A549 (cell line): ENCODE measurements at regions of chr10 and their contacts with region 1.

Region 1: DNA sequence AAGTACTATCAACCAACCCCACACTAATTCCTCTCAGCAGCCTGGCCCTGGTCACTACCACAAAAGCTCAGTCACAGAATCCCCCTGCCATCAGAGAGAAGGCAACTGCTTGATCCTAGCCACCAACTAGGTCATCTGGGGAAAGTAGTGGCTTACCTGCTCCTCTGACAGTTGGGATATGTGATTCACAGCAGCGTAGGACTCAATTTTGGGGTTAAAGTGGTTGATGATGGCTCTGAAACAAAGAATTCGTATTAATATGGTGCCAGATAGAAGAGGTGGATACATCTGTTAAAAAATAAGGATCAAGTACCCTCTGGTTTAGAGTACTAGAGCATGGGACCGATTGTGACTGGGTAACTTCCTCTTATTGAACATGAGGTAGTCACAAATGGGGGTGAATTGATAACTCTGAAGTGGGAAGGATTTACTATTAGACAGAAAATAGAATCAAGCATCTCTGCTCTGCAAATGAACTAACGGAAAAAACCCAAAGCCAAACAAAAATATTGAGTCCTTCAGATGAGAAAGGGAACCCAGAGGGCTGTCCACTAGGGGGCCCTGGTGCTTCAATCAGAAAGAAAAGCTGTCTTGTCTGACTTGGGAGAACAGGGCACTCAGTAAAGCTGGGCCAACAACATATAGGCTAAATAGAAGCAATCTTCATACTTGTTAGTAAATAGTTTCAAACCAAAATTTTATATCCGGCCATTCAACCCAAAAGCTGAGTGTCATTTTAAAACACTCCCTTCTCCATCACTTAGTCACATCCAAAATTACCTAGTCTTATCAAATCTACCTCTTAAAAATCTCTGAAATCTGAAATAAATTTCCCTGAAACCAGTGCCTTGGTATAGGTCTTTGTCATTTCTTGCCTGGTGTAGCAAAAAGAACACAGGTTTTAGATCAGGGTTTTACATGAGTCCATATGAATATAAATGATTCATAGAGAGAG is 45.9 kb upstream of the KCNIP2 start:
- DNase-seq: peak; percentile 69 to 73
- ATAC-seq: peak; percentile 93; a peak in 5 of 6 replicates
- H3K4me3 ChIP-seq: no peak overlapping the region
- H3K27ac ChIP-seq: peak overlapping the region; percentile 31 to 65; a peak in 2 of 6 replicates
- H3K4me1 ChIP-seq: peaks cover 12% of the 10 kb centered on the region
- CTCF ChIP-seq: peak; percentile 93
- EP300 ChIP-seq: no peak
- POLR2A ChIP-seq: no peak
- RAD21 ChIP-seq: peak; percentile 83 to 89

Region 2: DNA sequence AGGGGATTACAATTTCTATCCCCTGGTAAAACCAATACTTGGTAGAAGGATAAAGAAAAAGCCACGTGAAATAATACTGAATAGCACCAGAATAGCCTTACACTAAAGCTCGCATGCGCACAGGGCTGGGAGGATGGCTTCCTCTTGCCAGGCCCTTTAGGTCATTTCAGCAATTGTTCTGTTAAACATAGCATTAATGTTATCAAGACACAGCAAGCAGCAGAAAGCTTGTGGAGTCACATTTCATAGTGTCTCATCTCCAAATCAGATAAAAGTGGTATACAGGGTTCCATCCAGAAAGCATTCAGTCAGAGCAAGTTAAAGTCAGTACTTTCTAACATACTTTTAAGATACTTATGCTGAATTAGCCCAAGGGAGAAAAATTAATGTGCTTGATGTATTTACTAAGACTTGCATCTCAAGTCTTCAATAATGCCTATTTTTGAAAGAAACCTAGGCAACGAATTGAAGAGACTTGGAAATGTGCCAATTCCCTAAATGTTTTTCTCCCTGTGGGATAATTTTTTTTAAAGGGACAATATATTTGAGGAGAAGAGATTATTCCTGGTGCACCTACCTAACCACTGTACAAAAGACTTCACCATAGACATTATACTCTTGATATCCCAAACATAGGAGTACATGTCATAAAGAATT is 92.0 kb before region 1 on chr10:
- CTCF ChIA-PET with region 1: no interaction called
- POLR2A ChIA-PET with region 1: no interaction called
- DNase-seq: no peak
- ATAC-seq: no peak
- H3K4me3 ChIP-seq: no peak overlapping the region
- H3K27ac ChIP-seq: no peak overlapping the region
- H3K4me1 ChIP-seq: no peaks in the 10 kb centered on the region
- CTCF ChIP-seq: no peak
- EP300 ChIP-seq: no peak
- POLR2A ChIP-seq: no peak
- RAD21 ChIP-seq: no peak

Region 3: DNA sequence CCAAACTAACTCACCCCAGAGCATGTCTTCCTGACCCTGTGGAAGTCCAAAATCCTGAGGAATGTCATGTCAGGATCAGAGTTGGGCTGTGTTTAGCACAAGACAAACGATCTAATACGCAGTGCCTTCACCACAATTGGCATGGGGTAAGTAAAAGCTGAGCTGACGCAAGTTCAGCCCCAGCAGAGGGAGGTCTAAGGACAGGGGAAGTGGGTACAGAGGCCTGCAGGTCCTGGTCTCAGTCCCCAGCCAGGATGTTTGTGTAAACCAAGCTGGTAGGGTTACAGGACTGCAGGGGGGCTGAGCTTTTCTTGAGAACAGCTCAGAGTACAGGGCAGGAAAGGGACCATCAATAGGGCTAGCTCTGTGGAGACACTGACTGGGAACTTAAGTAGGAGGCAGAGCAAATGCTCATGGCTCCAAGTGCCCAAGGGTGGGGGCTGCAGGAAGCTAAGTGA is 40.6 kb before region 1 on chr10:
- CTCF ChIA-PET with region 1: interaction called, 73 read pairs
- POLR2A ChIA-PET with region 1: no interaction called
- DNase-seq: no peak
- ATAC-seq: no peak
- H3K4me3 ChIP-seq: no peak overlapping the region
- H3K27ac ChIP-seq: no peak overlapping the region
- H3K4me1 ChIP-seq: no peaks in the 10 kb centered on the region
- CTCF ChIP-seq: no peak
- EP300 ChIP-seq: no peak
- POLR2A ChIP-seq: no peak
- RAD21 ChIP-seq: no peak

Region 4: GRCh38 chr10:101858723-101859500 is 30.6 kb before region 1 on chr10:
- CTCF ChIA-PET with region 1: interaction called, 16 read pairs
- POLR2A ChIA-PET with region 1: no interaction called
- DNase-seq: no peak
- ATAC-seq: no peak
- H3K4me3 ChIP-seq: no peak overlapping the region
- H3K27ac ChIP-seq: no peak overlapping the region
- H3K4me1 ChIP-seq: peaks cover 10% of the 10 kb centered on the region; the same call in 2 of the 3 replicates
- CTCF ChIP-seq: no peak
- EP300 ChIP-seq: no peak
- POLR2A ChIP-seq: no peak
- RAD21 ChIP-seq: no peak

Region 5: DNA sequence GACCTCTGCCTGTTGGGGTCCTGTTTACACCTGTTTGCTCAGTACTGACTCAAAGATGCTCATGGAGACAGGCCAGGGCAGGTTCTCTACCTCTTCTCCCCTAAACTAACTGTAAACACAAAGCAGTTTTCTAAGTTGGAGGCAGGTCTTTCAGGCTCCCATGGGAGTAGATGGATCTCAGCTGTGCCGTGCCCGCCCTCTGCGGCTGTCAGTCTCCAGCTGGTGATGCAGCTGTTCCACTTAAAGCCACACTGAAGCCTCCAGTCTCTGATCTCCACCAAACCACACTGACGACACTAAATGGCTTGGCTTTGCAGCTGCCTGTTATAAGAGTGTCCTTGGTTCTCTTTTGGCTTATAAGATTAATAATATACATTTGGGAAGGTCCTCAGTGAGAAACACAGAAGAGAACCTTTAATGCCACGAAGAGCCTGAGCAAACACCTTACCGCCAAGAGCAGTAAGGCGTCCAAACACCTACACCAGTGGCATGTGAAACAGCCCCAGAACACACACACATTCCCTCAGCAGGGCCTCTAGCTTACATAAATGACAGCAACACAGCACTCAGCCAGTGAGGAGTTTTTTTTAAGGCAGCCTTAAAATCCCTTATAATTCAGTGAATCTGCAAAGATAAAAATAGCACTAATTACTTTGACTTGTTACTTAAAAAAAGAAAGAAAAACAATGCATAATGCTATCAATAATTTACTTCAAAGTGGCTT is 14.5 kb after region 1 on chr10:
- CTCF ChIA-PET with region 1: interaction called, 24 read pairs
- POLR2A ChIA-PET with region 1: no interaction called
- DNase-seq: no peak
- ATAC-seq: no peak
- H3K4me3 ChIP-seq: no peak overlapping the region
- H3K27ac ChIP-seq: no peak overlapping the region
- H3K4me1 ChIP-seq: no peaks in the 10 kb centered on the region
- CTCF ChIP-seq: no peak
- EP300 ChIP-seq: no peak
- POLR2A ChIP-seq: no peak
- RAD21 ChIP-seq: no peak